ENCODE measurements at regions of chr20 and their contacts with region 1.

Region 1: GRCh38 chr20:38645980-38646858 is 44.6 kb downstream of the ARHGAP40 start:
- DNase-seq: peak; percentile 54 to 81
- H3K4me3 ChIP-seq: no peak overlapping the region
- H3K27ac ChIP-seq: no peak overlapping the region
- H3K4me1 ChIP-seq: peaks cover 0 to 9% (median 7%) of the 10 kb centered on the region in 4 donors
- H3K27me3 ChIP-seq: peaks cover 0 to 83% of the 10 kb centered on the region in 2 donors
- CTCF ChIP-seq: peak; percentile 90 to 92

Region 2: GRCh38 chr20:38893565-38894090 is 247.4 kb after region 1 on chr20:
- intact Hi-C with region 1: loop called (anchors 2 kb)
- DNase-seq: peak in 1 of 2 donors; percentile 51
- H3K4me3 ChIP-seq: no peak overlapping the region
- H3K27ac ChIP-seq: no peak overlapping the region
- H3K4me1 ChIP-seq: peaks cover 0 to 9% (median 3%) of the 10 kb centered on the region in 4 donors
- H3K27me3 ChIP-seq: peaks cover 0 to 31% of the 10 kb centered on the region in 2 donors
- CTCF ChIP-seq: peak; percentile 71 to 96